ENCODE measurements at regions of chr4 and their contacts with region 1.

Region 1: DNA sequence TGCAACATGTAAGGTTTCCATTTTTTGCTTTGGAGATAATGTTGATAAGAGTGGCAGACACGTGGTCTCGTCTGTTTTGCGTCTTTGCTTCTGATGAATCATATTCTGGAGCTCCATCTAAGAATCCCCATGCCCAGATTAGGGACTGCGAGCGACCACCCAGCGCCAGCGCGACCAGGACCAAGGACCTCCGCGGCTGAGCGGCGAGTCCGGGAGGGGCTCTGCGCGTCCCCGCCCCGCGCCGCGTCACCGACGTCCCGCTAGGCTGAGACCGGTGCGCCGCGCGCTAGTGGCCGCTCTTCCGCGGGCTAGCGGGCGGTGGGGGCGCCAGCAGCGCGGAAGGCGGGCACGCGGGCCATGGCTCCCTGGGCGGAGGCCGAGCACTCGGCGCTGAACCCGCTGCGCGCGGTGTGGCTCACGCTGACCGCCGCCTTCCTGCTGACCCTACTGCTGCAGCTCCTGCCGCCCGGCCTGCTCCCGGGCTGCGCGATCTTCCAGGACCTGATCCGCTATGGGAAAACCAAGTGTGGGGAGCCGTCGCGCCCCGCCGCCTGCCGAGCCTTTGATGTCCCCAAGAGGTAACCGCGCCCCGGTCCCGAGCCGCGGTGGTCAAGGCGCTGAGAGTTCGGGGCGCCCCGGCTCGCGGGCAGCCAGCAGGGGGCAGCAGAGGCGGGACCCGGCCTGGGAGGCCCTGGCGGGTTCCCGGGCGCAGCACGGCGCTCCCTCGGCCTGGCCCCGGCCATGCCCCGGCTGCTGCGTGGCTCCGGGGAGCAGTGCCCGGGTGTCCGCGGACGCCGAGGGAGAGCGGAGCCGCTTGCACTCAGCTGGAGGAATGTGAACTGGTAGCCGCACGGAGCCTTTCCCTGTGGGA is at the start of gene SRD5A3:
- DNase-seq: peak; percentile 44 to 95
- H3K4me3 ChIP-seq: peak within 1 kb of the TSS; percentile 42 to 79 (median 64)
- H3K27ac ChIP-seq: peak within 1 kb of the TSS; percentile 46; the same call in 1 of the 2 replicates
- H3K4me1 ChIP-seq: peaks cover 0 to 9% (median 5%) of the 10 kb centered on the region in 4 experiments
- H3K27me3 ChIP-seq: no peaks in the 10 kb centered on the region
- CTCF ChIP-seq: peak; percentile 69 to 78 (median 71)
- EP300 ChIP-seq: no peak
- POLR2A ChIP-seq: peak in 1 of 2 experiments; percentile 56; a peak in 2 of 3 replicates
- RAD21 ChIP-seq: peak; percentile 36 to 74; a peak in 3 of 4 replicates
- total RNA-seq, gene SRD5A3: 19.4 and 19.6 TPM in 2 replicates

Region 2: GRCh38 chr4:55330241-55330640 is 16.0 kb before region 1 on chr4:
- CTCF ChIA-PET with region 1: interaction called, 10 read pairs
- POLR2A ChIA-PET with region 1: no interaction called
- DNase-seq: no peak
- H3K4me3 ChIP-seq: no peak overlapping the region
- H3K27ac ChIP-seq: no peak overlapping the region
- H3K4me1 ChIP-seq: no peaks in the 10 kb centered on the region
- H3K27me3 ChIP-seq: no peaks in the 10 kb centered on the region
- CTCF ChIP-seq: no peak
- EP300 ChIP-seq: no peak
- POLR2A ChIP-seq: no peak
- RAD21 ChIP-seq: no peak